Activated CD4-positive, alpha-beta memory T cell treated with anti-CD3 and anti-CD28 coated beads for 36 hours (primary cell): ENCODE measurements at regions of chr1 and their contacts with region 1.

Region 1: GRCh38 chr1:171644805-171645483 is 7.5 kb downstream of the MYOC start:
- DNase-seq: peak; percentile 82
- H3K4me3 Mint-ChIP-seq: no peak overlapping the region
- H3K27ac Mint-ChIP-seq: no peak overlapping the region
- H3K4me1 Mint-ChIP-seq: peaks cover 4% of the 10 kb centered on the region
- H3K27me3 Mint-ChIP-seq: no peaks in the 10 kb centered on the region

Region 2: GRCh38 chr1:171654942-171655745 is 10.2 kb after region 1 on chr1:
- CTCF ChIA-PET with region 1: interaction called, 45 read pairs
- POLR2A ChIA-PET with region 1: no interaction called
- intact Hi-C with region 1: no loop called
- DNase-seq: peak; percentile 90
- H3K4me3 Mint-ChIP-seq: peak overlapping the region; percentile 43
- H3K27ac Mint-ChIP-seq: no peak overlapping the region
- H3K4me1 Mint-ChIP-seq: peaks cover 11% of the 10 kb centered on the region
- H3K27me3 Mint-ChIP-seq: peaks cover 5% of the 10 kb centered on the region

Region 3: GRCh38 chr1:171715813-171716251 is 70.9 kb after region 1 on chr1:
- CTCF ChIA-PET with region 1: interaction called, 25 read pairs
- POLR2A ChIA-PET with region 1: no interaction called
- intact Hi-C with region 1: no loop called
- DNase-seq: no peak
- H3K4me3 Mint-ChIP-seq: no peak overlapping the region
- H3K27ac Mint-ChIP-seq: no peak overlapping the region
- H3K4me1 Mint-ChIP-seq: peaks cover 3% of the 10 kb centered on the region
- H3K27me3 Mint-ChIP-seq: no peaks in the 10 kb centered on the region